ENCODE measurements at regions of chr1 and their contacts with region 1.

Region 1: DNA sequence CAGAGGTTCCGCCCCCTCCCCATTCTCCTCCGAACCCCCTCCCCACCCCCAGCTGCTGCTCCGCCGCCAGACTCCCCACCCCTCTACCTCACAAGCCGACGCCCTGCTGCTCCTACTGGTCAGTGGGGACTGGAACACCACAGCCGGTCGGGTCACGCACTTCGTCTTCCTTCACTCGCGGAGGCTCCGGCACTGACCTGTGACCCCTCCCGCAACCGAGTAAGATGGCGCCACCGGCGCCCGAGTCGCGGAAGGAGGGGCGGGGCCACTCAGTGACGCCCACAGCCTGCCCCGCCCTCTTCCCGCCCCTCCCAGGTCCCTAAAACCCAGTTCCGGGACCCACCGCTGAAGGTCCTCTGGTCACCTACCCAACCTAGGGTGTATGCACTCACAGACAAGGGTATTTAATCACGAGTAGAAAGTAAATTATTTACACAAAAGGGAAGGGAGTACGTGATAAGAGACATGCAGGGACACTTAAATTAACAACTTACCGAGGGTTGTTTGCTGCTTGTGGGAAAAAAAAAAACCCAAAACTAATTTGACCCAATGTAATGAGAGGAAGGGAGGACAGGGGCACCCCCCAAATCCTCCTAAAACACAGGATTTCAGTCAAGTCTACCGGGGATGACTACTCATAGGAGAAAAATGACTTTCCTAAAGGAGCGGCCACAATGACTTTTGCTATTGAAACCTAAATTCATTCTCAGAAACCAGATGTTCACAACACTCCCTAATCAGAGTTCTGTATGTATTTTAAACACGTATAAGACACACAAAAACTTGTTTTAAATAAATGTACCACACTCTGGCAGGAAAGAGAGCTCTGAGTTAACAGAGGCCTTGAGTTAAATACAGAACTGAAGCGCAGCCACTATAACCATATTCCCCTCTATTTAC is at the start of gene RIT1:
- DNase-seq: peak; percentile 59 to 94
- H3K4me3 ChIP-seq: peak within 1 kb of the TSS; percentile 78 to 84
- H3K27ac ChIP-seq: peak within 1 kb of the TSS; percentile 90 to 95
- H3K4me1 ChIP-seq: peaks cover 3 to 15% of the 10 kb centered on the region in 2 donors
- H3K27me3 ChIP-seq: no peaks in the 10 kb centered on the region
- CTCF ChIP-seq: peak in 1 of 3 experiments; percentile 16
- total RNA-seq, gene RIT1: 17.1 TPM

Region 2: DNA sequence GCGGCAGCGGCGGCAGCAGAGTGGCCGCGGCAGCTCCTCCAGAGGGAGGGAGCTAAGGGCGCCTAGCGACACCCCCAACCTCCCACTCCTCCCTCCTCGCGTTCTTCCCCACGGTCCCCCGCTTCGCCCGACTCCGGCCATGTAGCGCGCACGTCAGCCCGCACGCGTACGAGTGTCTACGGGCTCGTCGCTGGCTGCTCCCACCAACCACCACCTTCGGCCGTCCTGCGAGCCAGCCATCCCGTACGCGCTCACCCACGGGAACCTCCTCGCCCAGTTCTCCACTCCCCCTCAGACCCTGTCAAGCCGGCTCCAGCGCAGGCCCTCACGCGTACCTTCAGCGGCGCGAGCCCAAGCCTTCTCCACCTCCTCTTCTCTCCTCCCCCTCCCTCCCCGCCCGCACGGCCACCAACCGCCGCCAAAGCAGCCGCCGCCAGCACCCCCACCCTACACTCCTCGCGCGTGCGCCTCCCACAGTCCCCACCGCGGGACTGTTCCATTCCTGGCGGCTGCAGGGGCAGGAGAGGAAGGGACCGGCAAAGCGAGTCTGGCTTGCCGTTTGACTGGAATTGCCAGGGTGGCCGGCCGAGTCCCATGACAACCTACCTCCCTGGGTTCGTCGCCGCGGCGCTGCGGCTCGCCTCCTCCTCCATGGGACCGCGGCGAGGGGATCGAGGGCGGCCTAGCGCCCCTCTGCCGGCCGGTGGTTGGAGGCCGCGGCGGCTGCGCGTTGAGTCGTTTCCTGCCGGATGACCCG is 222.9 kb before region 1 on chr1 and contains the start of gene YY1AP1:
- intact Hi-C with region 1: loop called (anchors 2 kb)
- DNase-seq: peak; percentile 56 to 94
- H3K4me3 ChIP-seq: peak within 1 kb of the TSS; percentile 78 to 98
- H3K27ac ChIP-seq: peak within 1 kb of the TSS; percentile 95 to 98
- H3K4me1 ChIP-seq: peaks cover 4 to 25% of the 10 kb centered on the region in 2 donors
- H3K27me3 ChIP-seq: no peaks in the 10 kb centered on the region
- CTCF ChIP-seq: peak in 2 of 3 experiments; percentile 32 to 33
- total RNA-seq, gene YY1AP1: 24.2 TPM

Region 3: DNA sequence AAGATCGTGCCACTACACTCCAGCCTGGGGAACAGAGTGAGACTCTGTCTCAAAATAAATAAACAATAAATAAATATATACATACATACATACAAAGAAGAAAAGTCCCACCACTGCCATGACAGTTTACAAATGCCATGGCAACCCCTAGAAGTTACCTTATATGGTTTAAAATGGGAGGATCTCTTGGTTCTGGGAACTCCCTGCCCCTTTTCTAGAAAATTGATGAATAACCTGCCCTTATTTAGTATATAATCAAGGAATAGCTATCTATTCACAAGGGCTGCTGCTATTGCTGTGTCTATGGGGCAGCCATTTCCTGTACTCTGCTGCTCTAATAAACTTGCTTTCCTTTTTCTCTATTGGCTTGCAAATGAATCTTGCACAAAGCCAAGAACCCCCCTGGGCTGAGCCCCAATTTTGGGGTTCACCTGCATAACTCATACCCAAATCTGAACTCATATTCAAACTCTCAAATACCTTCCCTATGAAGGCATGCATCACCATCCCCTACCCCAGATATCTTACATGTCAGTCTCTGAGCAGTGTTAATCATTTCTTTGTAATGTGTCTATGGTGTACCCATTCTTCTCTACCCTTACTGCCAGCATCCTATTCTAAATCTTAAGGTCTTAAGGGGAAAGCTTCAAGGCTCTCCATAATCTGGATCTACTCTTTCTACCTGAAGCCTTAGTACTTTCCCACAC is 63.4 kb before region 1 on chr1:
- intact Hi-C with region 1: no loop called
- DNase-seq: no peak
- H3K4me3 ChIP-seq: no peak overlapping the region
- H3K27ac ChIP-seq: no peak overlapping the region
- H3K4me1 ChIP-seq: no peaks in the 10 kb centered on the region
- H3K27me3 ChIP-seq: no peaks in the 10 kb centered on the region
- CTCF ChIP-seq: no peak

Region 4: GRCh38 chr1:155893389-155894142 is 17.8 kb before region 1 on chr1:
- intact Hi-C with region 1: loop called (anchors 2 kb)
- DNase-seq: peak in 1 of 2 donors; percentile 71
- H3K4me3 ChIP-seq: peak overlapping the region in 1 of 2 donors; percentile 19
- H3K27ac ChIP-seq: peak overlapping the region; percentile 88 to 92
- H3K4me1 ChIP-seq: peaks cover 0 to 18% of the 10 kb centered on the region in 2 donors
- H3K27me3 ChIP-seq: no peaks in the 10 kb centered on the region
- CTCF ChIP-seq: no peak

Region 5: GRCh38 chr1:156126043-156126700 is 214.8 kb after region 1 on chr1:
- intact Hi-C with region 1: no loop called
- DNase-seq: peak; percentile 91 to 99
- H3K4me3 ChIP-seq: peak overlapping the region; percentile 93 to 100
- H3K27ac ChIP-seq: peak overlapping the region; percentile 97
- H3K4me1 ChIP-seq: peaks cover 47 to 80% of the 10 kb centered on the region in 2 donors
- H3K27me3 ChIP-seq: no peaks in the 10 kb centered on the region
- CTCF ChIP-seq: peak; percentile 28 to 53 (median 33)